Left lung (tissue), 14 donors: ENCODE measurements at regions of chr2 and their contacts with region 1.

Region 1: GRCh38 chr2:176814306-176815052 is 398.1 kb upstream of the HNRNPA3 start:
- DNase-seq: no peak
- ATAC-seq: peak; percentile 88
- H3K4me3 ChIP-seq: no peak overlapping the region
- H3K27ac ChIP-seq: no peak overlapping the region
- H3K4me1 ChIP-seq: no peaks in the 10 kb centered on the region
- H3K27me3 ChIP-seq: no peaks in the 10 kb centered on the region
- CTCF ChIP-seq: peak; percentile 28 to 54

Region 2: GRCh38 chr2:176653479-176654443 is 160.7 kb before region 1 on chr2:
- intact Hi-C with region 1: loop called in 1 of 2 experiments (anchors 10 kb)
- DNase-seq: peak in 2 of 4 donors; percentile 44 to 61
- ATAC-seq: peak; percentile 89
- H3K4me3 ChIP-seq: no peak overlapping the region
- H3K27ac ChIP-seq: no peak overlapping the region
- H3K4me1 ChIP-seq: no peaks in the 10 kb centered on the region
- H3K27me3 ChIP-seq: peaks cover 9 to 59% of the 10 kb centered on the region in 2 donors
- CTCF ChIP-seq: peak; percentile 52 to 56

Region 3: GRCh38 chr2:177148477-177149154 is 334.1 kb after region 1 on chr2:
- intact Hi-C with region 1: loop called in 1 of 2 experiments (anchors 10 kb)
- DNase-seq: peak; percentile 72 to 86 (median 77)
- ATAC-seq: peak; percentile 98
- H3K4me3 ChIP-seq: peak overlapping the region in 1 of 2 donors; percentile 41
- H3K27ac ChIP-seq: no peak overlapping the region
- H3K4me1 ChIP-seq: peaks cover 2 to 15% of the 10 kb centered on the region in 2 donors
- H3K27me3 ChIP-seq: peaks cover 30 to 68% of the 10 kb centered on the region in 2 donors
- CTCF ChIP-seq: peak; percentile 70 to 78